Dorsolateral prefrontal cortex (tissue), 120 donors: ENCODE measurements at regions of chr19 and their contacts with region 1.

Region 1: GRCh38 chr19:18281082-18282020 is at the start of gene JUND:
- DNase-seq: peak; percentile 95 to 99 (median 97)
- H3K4me3 ChIP-seq: peak within 1 kb of the TSS; percentile 73 to 100 (median 98)
- H3K27ac ChIP-seq: peak within 1 kb of the TSS; percentile 95 to 100 (median 100)
- H3K27me3 ChIP-seq: no peaks in the 10 kb centered on the region
- CTCF ChIP-seq: peak in 2 of 56 donors; percentile 5 to 9
- total RNA-seq, gene JUND: 163 to 440 (median 240) TPM

Region 2: DNA sequence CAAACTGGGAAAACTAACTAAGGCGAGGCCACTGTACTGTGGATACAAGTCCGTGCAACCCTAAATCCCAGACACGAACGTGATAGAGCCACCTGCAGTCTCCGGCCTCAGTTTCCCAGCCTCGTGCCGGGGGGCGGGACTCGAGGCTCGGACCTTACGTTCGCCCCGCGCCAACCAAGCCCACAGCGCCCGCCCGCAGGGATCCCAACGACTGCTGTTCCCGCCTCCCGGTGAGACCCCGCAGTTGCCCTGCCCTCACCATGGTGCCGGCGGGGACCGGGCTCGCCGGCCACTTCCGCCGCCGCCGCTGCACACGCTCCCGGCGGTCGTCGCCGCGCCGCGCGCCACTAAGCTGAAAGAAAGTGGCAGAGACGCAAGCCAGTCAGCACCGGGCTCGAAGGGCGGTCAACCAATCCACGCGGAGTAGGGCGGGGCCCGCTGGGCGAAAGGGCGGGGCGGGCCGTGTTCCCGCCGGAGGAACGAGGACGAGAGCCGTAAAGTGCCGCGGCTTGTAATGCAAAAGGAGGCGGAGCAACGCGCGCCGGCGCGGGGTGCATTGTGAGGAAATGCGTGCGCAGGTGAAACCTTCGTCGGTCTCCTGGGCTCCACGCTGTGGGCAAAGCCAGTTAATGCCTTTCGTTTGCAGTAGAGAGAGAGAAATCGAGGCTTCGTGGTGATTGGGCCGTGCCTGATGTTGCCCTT is 41.6 kb after region 1 on chr19 and contains the start of gene LSM4:
- intact Hi-C with region 1: loop called (anchors 1 kb)
- DNase-seq: peak; percentile 96 to 99 (median 98)
- H3K4me3 ChIP-seq: peak within 1 kb of the TSS; percentile 60 to 96 (median 84)
- H3K27ac ChIP-seq: peak within 1 kb of the TSS; percentile 79 to 99 (median 94)
- H3K27me3 ChIP-seq: no peaks in the 10 kb centered on the region
- CTCF ChIP-seq: peak in 40 of 56 donors; percentile 7 to 54 (median 30)
- total RNA-seq, gene LSM4: 46.4 to 115 (median 74.8) TPM

Region 3: GRCh38 chr19:18388100-18388959 is 107.0 kb after region 1 on chr19:
- intact Hi-C with region 1: loop called (anchors 5 to 10 kb)
- DNase-seq: peak; percentile 54 to 83 (median 68)
- H3K4me3 ChIP-seq: peak overlapping the region; percentile 5 to 65 (median 44)
- H3K27ac ChIP-seq: peak overlapping the region in 23 of 59 donors; percentile 11 to 81 (median 36)
- H3K27me3 ChIP-seq: peaks cover 0 to 16% (median 0%) of the 10 kb centered on the region in 45 donors
- CTCF ChIP-seq: peak; percentile 78 to 100 (median 98)

Region 4: GRCh38 chr19:18408053-18408476 is 126.7 kb after region 1 on chr19:
- intact Hi-C with region 1: loop called in 1 of 2 experiments (anchors 2 kb)
- DNase-seq: no peak
- H3K4me3 ChIP-seq: no peak overlapping the region
- H3K27ac ChIP-seq: no peak overlapping the region
- H3K27me3 ChIP-seq: no peaks in the 10 kb centered on the region
- CTCF ChIP-seq: peak in 34 of 56 donors; percentile 10 to 42 (median 23)

Region 5: GRCh38 chr19:18488230-18488721 is 206.9 kb after region 1 on chr19:
- intact Hi-C with region 1: no loop called
- DNase-seq: peak in 2 of 10 donors; percentile 46 to 72
- H3K4me3 ChIP-seq: no peak overlapping the region
- H3K27ac ChIP-seq: peak overlapping the region in 41 of 59 donors; percentile 6 to 88 (median 48)
- H3K27me3 ChIP-seq: no peaks in the 10 kb centered on the region
- CTCF ChIP-seq: peak in 6 of 56 donors; percentile 8 to 26 (median 14)